ENCODE measurements at regions of chr1 and their contacts with region 1.

Region 1: GRCh38 chr1:152189657-152190442 is 30.8 kb upstream of the RPTN start:
- DNase-seq: peak; percentile 76
- ATAC-seq: peak; percentile 63
- H3K4me3 ChIP-seq: peak overlapping the region in 4 of 5 experiments; percentile 53 to 61 (median 58)
- H3K4me3 Mint-ChIP-seq: peak overlapping the region; percentile 79
- H3K27ac ChIP-seq: no peak overlapping the region
- H3K27ac Mint-ChIP-seq: peak overlapping the region; percentile 42
- H3K4me1 ChIP-seq: peaks cover 7 to 11% of the 10 kb centered on the region in 2 donors
- H3K4me1 Mint-ChIP-seq: peaks cover 6% of the 10 kb centered on the region
- H3K27me3 ChIP-seq: peaks cover 0 to 9% (median 0%) of the 10 kb centered on the region in 4 experiments
- H3K27me3 Mint-ChIP-seq: peaks cover 10% of the 10 kb centered on the region
- CTCF ChIP-seq: peak; percentile 88

Region 2: GRCh38 chr1:152047730-152048402 is 142.0 kb before region 1 on chr1:
- CTCF ChIA-PET with region 1: interaction called, 138 read pairs
- POLR2A ChIA-PET with region 1: no interaction called
- intact Hi-C with region 1: no loop called
- DNase-seq: peak; percentile 88
- ATAC-seq: peak; percentile 92
- H3K4me3 ChIP-seq: peak overlapping the region in 4 of 5 experiments; percentile 14 to 30 (median 19)
- H3K4me3 Mint-ChIP-seq: peak overlapping the region; percentile 76
- H3K27ac ChIP-seq: peak overlapping the region; percentile 93 to 97
- H3K27ac Mint-ChIP-seq: peak overlapping the region; percentile 97
- H3K4me1 ChIP-seq: peaks cover 17 to 19% of the 10 kb centered on the region in 2 donors
- H3K4me1 Mint-ChIP-seq: peaks cover 16% of the 10 kb centered on the region
- H3K27me3 ChIP-seq: no peaks in the 10 kb centered on the region
- H3K27me3 Mint-ChIP-seq: peaks cover 5% of the 10 kb centered on the region
- CTCF ChIP-seq: peak; percentile 48

Region 3: DNA sequence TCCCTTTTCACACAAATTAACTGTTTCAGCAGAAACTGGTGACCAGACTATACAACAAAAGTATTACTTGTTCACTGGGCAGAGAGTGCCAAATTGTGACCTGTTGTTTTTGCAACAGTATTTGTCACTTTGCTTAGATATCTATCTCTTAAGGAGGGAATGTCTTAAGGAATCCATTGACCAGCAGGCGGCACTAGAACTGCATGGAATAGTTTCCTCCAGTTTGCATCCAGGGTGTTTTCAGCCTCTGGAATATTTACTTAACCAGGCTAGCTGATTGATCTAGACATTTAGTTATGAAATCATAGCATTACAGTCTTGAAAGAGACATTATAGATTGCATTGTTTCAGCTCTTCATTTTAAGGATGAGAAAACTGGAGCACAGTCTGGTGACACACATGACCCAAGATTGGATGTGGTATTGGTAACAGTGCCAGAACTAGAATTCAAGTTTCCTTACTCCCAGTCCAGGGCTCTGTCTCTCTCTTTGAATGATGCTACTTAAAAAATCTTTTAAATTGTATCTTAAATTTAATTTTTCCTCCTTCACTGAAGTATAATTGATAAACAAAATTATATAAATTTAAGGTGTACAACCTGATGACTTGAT is 47.8 kb before region 1 on chr1:
- CTCF ChIA-PET with region 1: no interaction called
- POLR2A ChIA-PET with region 1: no interaction called
- intact Hi-C with region 1: loop called (anchors 1 kb)
- DNase-seq: peak; percentile 15
- ATAC-seq: no peak
- H3K4me3 ChIP-seq: no peak overlapping the region
- H3K4me3 Mint-ChIP-seq: no peak overlapping the region
- H3K27ac ChIP-seq: no peak overlapping the region
- H3K27ac Mint-ChIP-seq: no peak overlapping the region
- H3K4me1 ChIP-seq: no peaks in the 10 kb centered on the region
- H3K4me1 Mint-ChIP-seq: no peaks in the 10 kb centered on the region
- H3K27me3 ChIP-seq: peaks cover 0 to 10% (median 6%) of the 10 kb centered on the region in 4 experiments
- H3K27me3 Mint-ChIP-seq: peaks cover 48% of the 10 kb centered on the region
- CTCF ChIP-seq: peak; percentile 22

Region 4: DNA sequence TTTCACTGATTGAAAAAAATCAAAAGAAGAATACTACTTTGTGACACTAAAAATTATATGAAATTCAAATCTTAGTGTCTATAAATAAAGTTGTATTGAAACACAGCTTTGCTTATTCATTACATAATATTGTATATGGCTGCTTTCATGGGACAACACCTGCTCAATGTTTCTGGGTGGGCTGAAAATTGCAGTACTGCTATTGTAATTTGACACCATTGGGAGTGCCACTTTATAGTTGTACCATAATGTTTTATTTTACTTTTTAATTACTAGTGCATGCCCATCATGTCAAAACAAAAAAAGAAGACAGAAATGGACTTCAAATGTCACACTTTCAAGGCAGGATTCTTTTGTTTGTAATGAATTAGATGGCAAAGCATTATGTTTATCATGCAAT is 14.3 kb before region 1 on chr1:
- CTCF ChIA-PET with region 1: interaction called, 31 read pairs
- POLR2A ChIA-PET with region 1: no interaction called
- intact Hi-C with region 1: no loop called
- DNase-seq: no peak
- ATAC-seq: no peak
- H3K4me3 ChIP-seq: no peak overlapping the region
- H3K4me3 Mint-ChIP-seq: no peak overlapping the region
- H3K27ac ChIP-seq: no peak overlapping the region
- H3K27ac Mint-ChIP-seq: no peak overlapping the region
- H3K4me1 ChIP-seq: no peaks in the 10 kb centered on the region
- H3K4me1 Mint-ChIP-seq: no peaks in the 10 kb centered on the region
- H3K27me3 ChIP-seq: peaks cover 0 to 4% (median 0%) of the 10 kb centered on the region in 4 experiments
- H3K27me3 Mint-ChIP-seq: peaks cover 37% of the 10 kb centered on the region
- CTCF ChIP-seq: no peak

Region 5: GRCh38 chr1:152347116-152347728 is 157.4 kb after region 1 on chr1:
- CTCF ChIA-PET with region 1: interaction called, 4 read pairs
- POLR2A ChIA-PET with region 1: no interaction called
- intact Hi-C with region 1: loop called (anchors 5 kb)
- DNase-seq: peak; percentile 66
- ATAC-seq: peak; percentile 45
- H3K4me3 ChIP-seq: no peak overlapping the region
- H3K4me3 Mint-ChIP-seq: no peak overlapping the region
- H3K27ac ChIP-seq: no peak overlapping the region
- H3K27ac Mint-ChIP-seq: no peak overlapping the region
- H3K4me1 ChIP-seq: no peaks in the 10 kb centered on the region
- H3K4me1 Mint-ChIP-seq: no peaks in the 10 kb centered on the region
- H3K27me3 ChIP-seq: peaks cover 0 to 5% (median 2%) of the 10 kb centered on the region in 4 experiments
- H3K27me3 Mint-ChIP-seq: peaks cover 8% of the 10 kb centered on the region
- CTCF ChIP-seq: peak; percentile 96

Region 6: DNA sequence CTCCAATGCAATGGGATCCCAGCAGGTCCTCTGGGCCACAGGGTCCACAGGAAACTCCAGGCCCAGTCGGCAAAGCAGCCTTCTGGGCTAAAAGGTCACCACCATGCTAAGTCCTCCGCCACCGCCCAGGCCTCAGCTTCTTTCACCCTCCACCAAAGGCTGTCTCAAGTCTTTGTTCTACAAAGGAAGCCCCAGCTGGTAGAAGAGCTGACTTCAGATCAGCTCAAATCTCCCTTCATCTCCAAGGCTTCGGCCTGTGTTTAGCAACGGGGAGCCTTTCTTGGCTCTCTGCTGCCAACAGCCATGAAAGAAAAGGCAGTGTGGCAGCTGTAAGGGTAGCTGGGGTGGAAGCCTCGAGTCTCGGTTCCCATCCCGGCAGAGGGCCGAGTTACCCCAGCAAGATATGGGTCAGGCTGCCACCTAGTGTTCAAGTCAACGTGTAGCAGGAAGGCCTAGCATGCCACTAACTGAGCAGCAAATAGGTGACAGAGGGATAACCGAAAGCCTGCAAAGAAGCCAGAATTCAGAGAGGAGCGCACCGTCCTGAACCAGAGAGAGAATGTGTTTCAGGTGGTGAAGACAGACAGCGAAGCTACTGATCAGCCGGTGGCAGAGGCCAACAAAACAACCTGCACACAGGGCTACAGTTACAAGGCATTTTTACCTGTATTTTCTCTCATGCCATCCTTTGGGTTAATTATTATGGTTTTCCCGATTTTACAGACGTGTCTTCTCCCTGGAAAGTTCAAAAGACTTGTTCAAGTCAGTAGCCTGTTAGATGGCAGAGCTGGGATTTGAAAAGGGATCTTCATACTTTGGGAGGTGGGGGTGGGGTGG is 251.0 kb after region 1 on chr1:
- CTCF ChIA-PET with region 1: interaction called, 8 read pairs
- POLR2A ChIA-PET with region 1: no interaction called
- intact Hi-C with region 1: loop called (anchors 1 kb)
- DNase-seq: peak; percentile 78
- ATAC-seq: peak; percentile 95
- H3K4me3 ChIP-seq: no peak overlapping the region
- H3K4me3 Mint-ChIP-seq: no peak overlapping the region
- H3K27ac ChIP-seq: no peak overlapping the region
- H3K27ac Mint-ChIP-seq: no peak overlapping the region
- H3K4me1 ChIP-seq: peaks cover 0 to 3% of the 10 kb centered on the region in 2 donors
- H3K4me1 Mint-ChIP-seq: peaks cover 2% of the 10 kb centered on the region
- H3K27me3 ChIP-seq: peaks cover 0 to 19% (median 3%) of the 10 kb centered on the region in 4 experiments
- H3K27me3 Mint-ChIP-seq: peaks cover 28% of the 10 kb centered on the region
- CTCF ChIP-seq: peak; percentile 79

Measured in B cell (primary cell).